ENCODE measurements at regions of chr16 and their contacts with region 1.

Region 1: GRCh38 chr16:67428146-67428731 is 2.7 kb upstream of the HSD11B2 start:
- DNase-seq: peak; percentile 71
- ATAC-seq: peak; percentile 72
- H3K4me3 Mint-ChIP-seq: no peak overlapping the region
- H3K27ac Mint-ChIP-seq: no peak overlapping the region
- H3K4me1 Mint-ChIP-seq: peaks cover 7% of the 10 kb centered on the region
- H3K27me3 Mint-ChIP-seq: peaks cover 68% of the 10 kb centered on the region

Region 2: DNA sequence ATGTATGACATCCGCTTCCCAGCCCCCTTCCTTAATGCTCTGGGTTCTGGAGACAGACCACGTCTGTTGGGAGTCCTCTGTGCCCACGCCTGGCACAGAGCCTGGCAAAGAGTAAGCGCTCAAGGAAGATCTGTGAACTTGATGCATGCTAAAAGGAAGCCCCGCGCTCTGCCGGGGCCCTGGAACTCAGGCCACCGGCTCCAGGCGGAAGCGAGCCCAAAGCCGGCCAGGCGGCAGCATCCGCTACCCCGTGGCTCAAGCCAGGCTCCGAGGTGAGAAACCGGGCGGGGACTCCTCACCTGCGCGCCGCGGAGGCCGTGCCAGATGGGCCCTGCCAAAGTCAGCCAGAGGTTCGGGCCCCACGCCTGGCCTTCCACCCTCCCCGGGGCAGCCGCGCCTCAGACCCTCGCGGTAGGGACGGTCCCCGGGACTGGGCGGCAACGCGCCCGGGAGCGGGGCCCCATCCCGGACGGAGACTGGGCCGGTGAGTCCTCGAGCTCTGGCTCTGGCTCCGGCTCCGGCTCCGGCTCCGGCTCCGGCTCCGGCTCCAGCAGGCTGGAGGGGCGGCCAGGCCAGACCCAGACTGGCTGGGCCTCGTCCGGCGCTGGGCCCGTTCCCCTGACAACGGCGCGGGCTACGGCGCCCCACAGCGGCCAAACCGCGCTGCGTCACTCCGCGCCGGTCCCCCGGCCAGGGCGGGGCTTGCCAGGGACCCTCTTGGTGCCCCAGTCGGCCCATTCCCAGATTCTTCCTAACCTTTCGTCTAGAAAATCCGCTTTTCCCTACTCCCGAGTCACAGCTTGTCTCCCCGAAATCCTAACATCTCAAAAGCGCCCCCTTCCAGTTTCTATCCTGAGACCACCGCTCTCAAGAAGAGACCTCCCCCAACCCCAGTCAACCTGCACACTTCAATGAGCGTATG is 12.1 kb before region 1 on chr16 and contains the start of gene ZDHHC1:
- CTCF ChIA-PET with region 1: interaction called, 18 read pairs
- DNase-seq: peak; percentile 60
- ATAC-seq: peak; percentile 91
- H3K4me3 Mint-ChIP-seq: peak within 1 kb of the TSS; percentile 57
- H3K27ac Mint-ChIP-seq: no peak within 1 kb of the TSS
- H3K4me1 Mint-ChIP-seq: peaks cover 14% of the 10 kb centered on the region
- H3K27me3 Mint-ChIP-seq: peaks cover 36% of the 10 kb centered on the region
- total RNA-seq, gene ZDHHC1: 0.41 to 0.49 TPM

Region 3: GRCh38 chr16:67447508-67448076 is 19.4 kb after region 1 on chr16:
- CTCF ChIA-PET with region 1: interaction called, 139 read pairs
- DNase-seq: peak; percentile 86
- ATAC-seq: peak; percentile 92
- H3K4me3 Mint-ChIP-seq: no peak overlapping the region
- H3K27ac Mint-ChIP-seq: no peak overlapping the region
- H3K4me1 Mint-ChIP-seq: peaks cover 4% of the 10 kb centered on the region
- H3K27me3 Mint-ChIP-seq: no peaks in the 10 kb centered on the region

Region 4: DNA sequence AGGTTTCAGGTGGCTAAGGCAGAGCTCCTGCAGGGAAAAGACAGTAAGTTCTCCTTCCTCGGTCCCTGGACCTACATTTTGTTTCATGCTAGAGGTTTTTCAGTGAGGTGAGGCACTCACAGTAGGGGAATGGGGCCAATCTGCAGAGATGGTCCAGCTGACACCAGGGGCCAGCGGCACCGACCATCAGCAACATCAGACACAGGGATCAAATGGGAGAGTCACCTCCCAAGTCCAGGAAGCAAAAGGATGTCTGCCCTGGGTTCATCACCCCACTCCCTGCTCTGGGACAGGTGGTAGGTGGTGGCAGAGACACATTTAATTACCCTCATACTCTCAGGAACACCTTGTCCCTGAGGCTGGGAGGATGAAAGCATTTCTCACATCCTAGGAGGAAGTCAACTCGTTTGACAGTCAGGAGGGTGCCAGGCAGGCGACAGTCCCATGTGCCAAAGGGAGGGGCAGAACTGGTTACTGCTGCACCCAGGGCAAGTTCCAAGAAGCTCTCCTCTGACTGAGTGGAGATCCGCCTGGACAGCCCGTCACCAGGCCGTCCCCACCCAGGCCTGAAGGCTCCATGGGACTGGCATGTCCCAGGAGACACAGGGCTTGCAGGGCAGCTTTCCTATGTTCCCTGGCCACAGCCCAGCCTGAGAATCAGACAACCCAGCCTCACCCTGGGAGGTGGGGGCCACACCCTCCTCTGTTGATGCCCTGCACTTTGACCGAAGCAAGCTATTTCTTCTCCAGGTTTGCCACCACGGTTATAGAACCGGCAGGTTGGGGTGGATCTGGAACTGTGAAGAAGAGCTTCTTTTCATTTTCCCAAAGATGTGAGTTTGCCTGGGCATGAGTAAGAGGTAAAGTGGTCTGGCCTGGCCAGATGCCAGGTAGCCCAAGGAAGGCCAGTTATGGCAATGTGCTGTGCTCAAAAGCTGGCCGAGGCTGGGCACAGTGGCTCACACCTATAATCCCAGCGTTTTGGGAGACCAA is 33.7 kb after region 1 on chr16:
- CTCF ChIA-PET with region 1: interaction called, 70 read pairs
- DNase-seq: no peak
- ATAC-seq: no peak
- H3K4me3 Mint-ChIP-seq: no peak overlapping the region
- H3K27ac Mint-ChIP-seq: no peak overlapping the region
- H3K4me1 Mint-ChIP-seq: peaks cover 6% of the 10 kb centered on the region
- H3K27me3 Mint-ChIP-seq: no peaks in the 10 kb centered on the region

Region 5: DNA sequence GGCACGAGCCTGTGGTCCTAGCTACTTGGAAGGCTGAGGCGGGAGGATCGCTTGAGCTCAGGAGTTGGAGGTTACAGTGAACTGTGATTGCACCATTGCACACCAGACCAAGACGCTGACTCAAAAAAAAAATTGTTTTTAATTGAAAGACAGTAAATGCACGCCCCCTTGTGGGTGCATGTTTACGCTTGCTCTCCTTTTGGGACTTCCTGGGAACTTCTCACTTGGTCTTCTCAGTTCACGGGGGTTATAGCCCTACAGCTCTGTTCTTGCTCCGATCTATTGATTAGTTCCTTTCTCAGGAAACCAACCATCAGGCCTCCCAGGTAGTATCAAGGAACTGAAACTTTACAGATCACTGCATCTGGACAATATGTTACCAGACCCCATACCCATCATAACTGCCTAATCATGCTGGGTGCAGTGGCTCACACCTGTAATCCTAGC is 86.2 kb after region 1 on chr16:
- CTCF ChIA-PET with region 1: interaction called, 19 read pairs
- DNase-seq: peak; percentile 89
- ATAC-seq: peak; percentile 82
- H3K4me3 Mint-ChIP-seq: no peak overlapping the region
- H3K27ac Mint-ChIP-seq: peak overlapping the region; percentile 78
- H3K4me1 Mint-ChIP-seq: peaks cover 20% of the 10 kb centered on the region
- H3K27me3 Mint-ChIP-seq: no peaks in the 10 kb centered on the region

Measured in activated CD8-positive, alpha-beta memory T cell treated with anti-CD3 and anti-CD28 coated beads, Interleukin-2, amount 10 ng/mL, durations not matched to agents 7 days and 5 days (primary cell).